Heart right ventricle (tissue), 16 donors: ENCODE measurements at regions of chr16 and their contacts with region 1.

Region 1: DNA sequence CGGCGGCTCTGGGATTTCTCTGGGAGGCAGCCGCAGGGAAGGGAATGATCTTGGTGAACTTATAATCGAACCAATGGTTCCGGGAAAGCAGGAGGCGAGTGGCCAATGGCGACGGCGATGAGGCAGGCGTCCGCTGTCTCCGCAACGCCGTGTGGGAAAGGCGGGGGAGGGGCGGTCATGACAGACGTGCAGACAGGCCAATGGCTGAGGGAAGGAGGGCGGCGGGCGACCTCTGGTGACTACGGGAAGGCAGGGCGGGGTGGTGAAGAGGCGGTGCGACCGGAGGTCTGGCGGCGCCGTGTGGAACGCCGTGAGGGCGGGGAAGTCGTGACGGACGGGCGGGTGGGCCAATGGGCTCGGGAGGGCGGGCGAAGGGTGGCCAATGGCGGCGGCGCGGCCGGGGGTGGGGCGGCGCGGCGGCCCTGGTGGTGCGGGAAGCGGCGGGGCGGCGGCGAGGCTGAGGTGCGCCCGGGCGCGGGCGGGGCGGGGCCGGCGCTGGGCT is at the start of gene RAB40C:
- DNase-seq: peak; percentile 99
- ATAC-seq: peak; percentile 90 to 98 (median 96)
- H3K4me3 ChIP-seq: peak within 1 kb of the TSS; percentile 81 to 97 (median 92)
- H3K27ac ChIP-seq: peak within 1 kb of the TSS; percentile 80 to 100 (median 99)
- H3K4me1 ChIP-seq: peaks cover 10 to 64% (median 42%) of the 10 kb centered on the region in 9 donors
- H3K27me3 ChIP-seq: no peaks in the 10 kb centered on the region
- CTCF ChIP-seq: peak in 4 of 9 donors; percentile 11 to 42 (median 26)
- total RNA-seq, gene RAB40C: 9.1 to 16.1 (median 12.1) TPM

Region 2: DNA sequence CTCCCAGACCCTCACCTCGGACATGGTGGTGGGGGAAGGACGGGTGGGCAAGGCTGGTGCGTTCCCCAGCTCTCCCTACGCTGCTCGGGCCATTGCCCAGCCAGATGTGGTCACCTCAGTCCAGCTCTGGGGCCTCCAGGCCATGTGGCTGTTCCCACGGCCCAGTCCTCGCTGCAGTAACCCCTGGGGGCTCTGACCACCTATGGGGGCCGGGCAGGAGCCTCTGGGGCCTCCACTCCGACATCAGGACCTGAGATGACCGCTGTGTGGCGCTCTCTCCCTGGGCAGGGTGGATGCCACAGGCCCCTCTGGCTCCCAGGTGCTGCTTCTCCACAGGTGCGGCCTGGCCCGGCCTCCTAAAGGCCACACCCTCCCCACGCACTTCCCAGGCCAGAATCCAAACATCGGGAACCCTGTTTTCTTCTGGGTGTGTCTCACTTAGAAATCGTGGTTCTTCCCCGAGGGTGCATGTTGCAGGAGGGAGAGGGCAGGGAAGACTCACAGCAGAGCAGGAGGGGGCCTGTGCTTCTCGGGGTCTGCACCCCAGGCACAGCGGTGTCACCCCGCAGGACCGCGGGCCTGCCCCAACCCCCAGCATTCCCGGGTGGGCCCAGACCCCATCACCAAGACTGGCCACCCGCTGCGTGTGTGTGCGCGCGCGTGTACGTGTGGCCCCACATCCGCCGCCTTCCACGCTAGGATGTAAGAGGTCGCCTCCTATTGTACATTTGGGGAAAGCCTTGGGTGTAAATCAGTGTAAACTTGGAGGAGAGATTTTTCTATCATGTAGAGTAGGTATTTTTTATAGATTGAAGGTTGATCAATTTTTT is 68.1 kb before region 1 on chr16:
- intact Hi-C with region 1: no loop called
- DNase-seq: peak in 1 of 2 donors; percentile 9
- ATAC-seq: no peak
- H3K4me3 ChIP-seq: no peak overlapping the region
- H3K27ac ChIP-seq: no peak overlapping the region
- H3K4me1 ChIP-seq: peaks cover 6 to 23% (median 16%) of the 10 kb centered on the region in 9 donors
- H3K27me3 ChIP-seq: no peaks in the 10 kb centered on the region
- CTCF ChIP-seq: no peak

Region 3: DNA sequence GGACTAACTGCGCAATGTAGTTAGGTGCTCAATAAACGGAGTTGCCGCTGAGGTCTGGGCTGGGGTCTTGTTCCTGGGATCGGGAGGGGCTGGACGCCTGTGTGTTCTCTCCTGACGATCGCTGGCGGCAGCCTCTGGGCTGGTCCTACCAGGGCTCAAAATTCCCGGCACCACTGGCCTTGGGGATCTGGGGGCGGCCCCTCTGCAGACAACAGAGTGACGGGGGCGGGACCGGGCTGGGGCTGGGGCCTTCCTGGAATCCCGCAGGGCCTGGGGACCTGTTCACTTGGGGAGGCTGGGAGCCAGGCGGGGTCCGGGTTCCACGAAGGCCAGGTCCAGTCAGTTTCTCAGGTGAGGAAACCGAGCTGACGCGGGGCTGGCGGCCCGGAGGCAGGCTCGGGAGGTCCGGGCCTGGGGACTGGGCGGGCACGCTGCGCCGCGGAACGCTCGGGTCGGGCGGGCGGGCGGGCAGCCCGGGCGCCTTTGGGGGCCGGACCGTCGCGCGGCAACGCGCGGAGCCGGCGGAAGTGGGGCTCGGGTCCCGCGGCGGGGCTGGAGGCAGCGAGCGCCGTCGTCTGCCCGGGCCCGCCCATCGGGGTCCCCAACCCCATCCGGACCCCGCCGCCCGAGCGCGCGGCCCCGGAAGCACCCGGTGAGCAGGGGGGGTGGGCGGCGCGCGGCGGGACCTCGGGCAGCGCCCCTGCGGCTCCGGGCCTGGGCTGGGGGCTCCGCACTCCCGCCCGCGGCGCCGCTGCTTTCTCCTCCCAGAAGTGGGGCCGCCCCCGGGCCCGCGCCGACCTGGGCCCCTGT is 20.1 kb before region 1 on chr16 and contains the start of gene PIGQ:
- intact Hi-C with region 1: loop called in 1 of 10 experiments (anchors 2 kb)
- DNase-seq: peak; percentile 68 to 73
- ATAC-seq: peak; percentile 42 to 77 (median 64)
- H3K4me3 ChIP-seq: peak within 1 kb of the TSS; percentile 68 to 95 (median 86)
- H3K27ac ChIP-seq: peak within 1 kb of the TSS; percentile 9 to 91 (median 84)
- H3K4me1 ChIP-seq: peaks cover 18 to 50% (median 42%) of the 10 kb centered on the region in 9 donors
- H3K27me3 ChIP-seq: no peaks in the 10 kb centered on the region
- CTCF ChIP-seq: no peak
- total RNA-seq, gene PIGQ: 13.7 to 26.8 (median 19.2) TPM

Region 4: DNA sequence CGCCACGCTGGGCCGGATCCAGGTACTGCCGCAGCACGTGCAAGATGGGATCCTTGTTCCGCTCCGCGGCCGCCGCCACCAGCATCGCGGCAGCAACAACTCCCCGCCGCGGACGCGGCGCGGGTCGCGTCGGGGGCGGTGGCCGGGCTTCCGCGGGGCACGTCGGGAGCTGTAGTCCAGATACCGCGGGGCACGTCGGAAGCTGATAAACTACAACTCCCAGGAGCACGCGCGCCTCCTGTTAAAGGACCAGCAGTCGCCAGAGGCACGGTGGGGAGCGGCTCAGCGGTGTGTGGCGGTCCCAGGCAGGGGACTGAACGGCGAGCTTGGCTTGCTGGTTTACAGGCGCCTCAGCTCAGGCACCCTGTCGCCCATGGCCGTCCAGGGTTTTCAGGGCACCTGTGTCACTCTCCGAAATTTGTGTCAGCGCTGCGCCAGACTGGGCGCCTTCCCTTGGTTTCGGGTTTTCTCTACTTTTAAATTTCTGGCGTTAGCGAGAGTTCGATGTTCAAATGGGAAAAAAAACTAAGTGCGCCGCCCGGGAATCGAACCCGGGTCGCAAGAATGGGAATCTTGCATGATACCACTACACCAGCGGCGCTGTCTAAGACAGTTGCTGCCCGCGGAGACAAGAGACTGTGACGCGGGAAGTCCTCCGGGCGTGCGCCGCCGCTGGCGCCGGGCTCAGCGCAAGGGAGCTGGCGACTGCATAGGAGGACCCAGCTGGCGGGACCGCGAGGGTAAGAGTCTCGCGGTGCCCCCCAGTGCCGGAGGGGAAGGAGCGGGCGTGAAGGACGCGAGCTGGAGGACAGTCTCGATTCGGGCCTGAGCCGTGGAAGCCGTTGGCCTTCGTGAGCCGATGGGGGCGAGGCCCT is 46.7 kb after region 1 on chr16 and contains the start of gene METTL26:
- intact Hi-C with region 1: loop called in 4 of 10 experiments (anchors 2 to 5 kb)
- DNase-seq: peak; percentile 95 to 96
- ATAC-seq: peak; percentile 84 to 95 (median 91)
- H3K4me3 ChIP-seq: peak within 1 kb of the TSS; percentile 39 to 93 (median 86)
- H3K27ac ChIP-seq: peak within 1 kb of the TSS; percentile 77 to 99 (median 95)
- H3K4me1 ChIP-seq: peaks cover 10 to 34% (median 27%) of the 10 kb centered on the region in 9 donors
- H3K27me3 ChIP-seq: no peaks in the 10 kb centered on the region
- CTCF ChIP-seq: peak in 1 of 9 donors; percentile 27
- total RNA-seq, gene METTL26: 34.5 to 75.9 (median 43.8) TPM

Region 5: DNA sequence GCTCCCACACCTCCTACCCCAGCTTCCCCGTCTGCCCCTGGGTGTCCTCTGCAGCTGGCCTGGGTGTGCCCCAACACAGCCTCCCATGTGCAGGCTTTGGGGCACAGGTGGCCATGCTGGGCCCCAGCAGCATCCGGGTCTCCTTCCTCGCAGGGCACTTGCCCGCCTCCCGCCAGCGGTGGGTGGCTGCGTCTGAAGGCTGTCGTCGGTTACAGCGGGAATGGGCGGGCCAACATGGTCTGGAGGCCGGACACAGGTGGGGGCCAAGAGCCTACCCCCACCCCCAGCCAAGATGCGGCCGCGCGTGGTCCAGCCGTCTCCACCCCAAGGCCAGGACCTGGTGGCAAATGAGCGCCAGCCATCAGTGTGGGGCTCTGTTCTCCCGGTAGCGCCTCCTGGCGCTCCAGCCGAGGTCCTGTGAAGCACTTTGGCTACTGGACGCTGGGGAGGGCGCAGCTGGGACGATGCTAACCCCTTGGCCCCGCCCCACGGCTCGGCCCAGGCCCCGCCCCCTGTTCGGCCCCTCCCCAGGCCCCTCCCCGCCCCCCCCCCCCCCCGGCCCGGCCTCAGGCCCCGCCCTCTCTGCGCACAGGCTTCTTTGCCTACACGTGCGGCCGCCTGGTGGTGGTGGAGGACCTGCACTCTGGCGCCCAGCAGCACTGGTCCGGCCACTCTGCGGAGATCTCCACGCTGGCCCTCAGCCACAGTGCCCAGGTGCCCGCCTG is 70.9 kb after region 1 on chr16:
- intact Hi-C with region 1: loop called in 7 of 10 experiments (anchors 5 to 10 kb)
- DNase-seq: peak; percentile 87 to 89
- ATAC-seq: peak; percentile 74 to 92 (median 86)
- H3K4me3 ChIP-seq: peak overlapping the region in 6 of 10 donors; percentile 31 to 45 (median 40)
- H3K27ac ChIP-seq: peak overlapping the region in 9 of 10 donors; percentile 35 to 77 (median 64)
- H3K4me1 ChIP-seq: peaks cover 0 to 16% (median 12%) of the 10 kb centered on the region in 9 donors
- H3K27me3 ChIP-seq: no peaks in the 10 kb centered on the region
- CTCF ChIP-seq: peak; percentile 20 to 79 (median 63)

Region 6: GRCh38 chr16:709566-710499 is 120.1 kb after region 1 on chr16:
- intact Hi-C with region 1: no loop called
- DNase-seq: peak in 1 of 2 donors; percentile 65
- ATAC-seq: peak in 6 of 8 donors; percentile 25 to 52 (median 34)
- H3K4me3 ChIP-seq: no peak overlapping the region
- H3K27ac ChIP-seq: no peak overlapping the region
- H3K4me1 ChIP-seq: peaks cover 9 to 29% (median 16%) of the 10 kb centered on the region in 9 donors
- H3K27me3 ChIP-seq: peaks cover 15 to 74% (median 60%) of the 10 kb centered on the region in 7 donors
- CTCF ChIP-seq: no peak

Region 7: GRCh38 chr16:813204-813915 is 223.7 kb after region 1 on chr16:
- intact Hi-C with region 1: no loop called
- DNase-seq: peak in 1 of 2 donors; percentile 60
- ATAC-seq: peak; percentile 51 to 83 (median 67)
- H3K4me3 ChIP-seq: peak overlapping the region in 7 of 10 donors; percentile 12 to 34 (median 23)
- H3K27ac ChIP-seq: no peak overlapping the region
- H3K4me1 ChIP-seq: peaks cover 0 to 16% (median 5%) of the 10 kb centered on the region in 9 donors
- H3K27me3 ChIP-seq: peaks cover 7 to 69% (median 63%) of the 10 kb centered on the region in 7 donors
- CTCF ChIP-seq: peak; percentile 31 to 75 (median 67)